GM10248 (cell line): ENCODE measurements at regions of chr9 and their contacts with region 1.

Region 1: GRCh38 chr9:120985810-120986222 is 59.2 kb upstream of the TRAF1 start:
- DNase-seq: peak; percentile 48
- CTCF ChIP-seq: peak; percentile 66

Region 2: DNA sequence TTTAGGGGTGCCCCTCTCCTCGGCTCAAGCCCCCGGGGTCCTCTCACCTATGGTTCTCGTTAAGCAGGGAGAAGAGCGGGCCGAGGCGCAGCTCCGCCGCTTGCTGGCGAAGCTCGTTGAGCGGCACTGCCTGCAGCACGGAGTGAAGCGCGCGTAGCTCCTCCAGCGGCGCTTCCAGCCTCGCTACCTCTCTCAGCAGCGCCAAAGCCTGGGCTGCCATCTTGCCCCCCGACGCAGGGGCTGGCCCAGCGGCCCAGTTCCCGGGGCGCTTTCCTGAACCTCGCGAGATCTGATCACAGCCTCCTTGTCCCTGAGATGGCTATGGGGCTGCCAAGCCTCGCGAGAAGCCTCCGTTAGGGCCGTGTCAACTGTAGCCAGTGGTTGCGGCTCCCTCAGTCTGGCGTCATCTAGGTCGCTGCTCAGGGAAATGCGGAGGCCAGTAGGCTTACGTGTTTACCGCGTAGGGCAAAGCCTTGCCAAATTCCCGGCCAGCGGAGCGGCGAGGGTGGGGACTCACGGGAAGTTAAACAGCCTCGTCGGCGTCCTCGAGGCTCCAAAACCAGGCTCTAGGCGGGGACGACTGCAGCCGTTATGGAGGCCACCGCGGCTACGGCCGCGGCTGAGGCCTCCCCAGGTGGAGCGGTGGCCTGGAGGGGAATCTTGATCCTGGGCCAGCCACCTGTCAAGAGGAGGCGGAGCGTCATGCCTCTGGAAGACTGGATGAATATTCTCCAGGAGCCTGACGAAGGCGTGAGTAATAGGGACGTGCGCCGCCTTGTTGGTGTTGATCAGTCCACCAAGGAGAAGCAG is 142.9 kb before region 1 on chr9 and contains the start of gene PSMD5:
- CTCF ChIA-PET with region 1: no interaction called
- POLR2A ChIA-PET with region 1: no interaction called
- DNase-seq: peak; percentile 99
- CTCF ChIP-seq: no peak

Region 3: GRCh38 chr9:120950421-120951388 is 35.1 kb before region 1 on chr9:
- CTCF ChIA-PET with region 1: interaction called, 15 read pairs
- POLR2A ChIA-PET with region 1: no interaction called
- DNase-seq: no peak
- CTCF ChIP-seq: no peak

Region 4: GRCh38 chr9:120960001-120960400 is 25.8 kb before region 1 on chr9:
- CTCF ChIA-PET with region 1: interaction called, 15 read pairs
- POLR2A ChIA-PET with region 1: no interaction called
- DNase-seq: no peak
- CTCF ChIP-seq: no peak

Region 5: DNA sequence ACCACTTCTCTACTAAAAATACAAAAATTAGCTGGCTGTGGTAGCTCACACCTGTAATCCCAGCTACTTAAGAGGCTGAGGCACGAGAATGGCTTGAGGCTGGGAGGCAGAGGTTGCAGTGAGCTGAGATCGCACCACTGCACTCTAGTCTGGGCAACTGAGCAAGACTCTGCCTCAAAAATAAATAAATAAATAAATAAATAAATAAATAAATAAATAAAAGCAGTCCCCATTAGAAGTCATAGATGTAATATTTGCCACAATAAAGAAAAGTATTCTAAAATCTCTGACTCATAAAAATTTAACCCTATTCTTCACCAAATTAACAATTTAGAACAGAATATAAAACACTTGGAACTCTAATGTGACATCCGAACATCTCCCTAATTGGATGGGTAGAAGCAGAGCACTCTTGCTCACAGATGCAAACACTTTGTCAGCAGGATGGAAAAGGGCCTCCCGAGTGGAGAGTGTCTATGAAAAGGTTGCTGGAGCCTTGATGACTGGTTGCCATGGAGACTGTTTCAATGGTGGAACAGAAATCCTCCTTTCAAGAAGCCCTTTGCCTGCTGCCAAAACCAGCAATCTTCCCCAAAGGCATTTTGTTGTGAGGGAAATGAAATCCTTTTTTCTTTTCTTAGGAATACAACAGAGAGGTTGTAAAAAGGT is 20.3 kb before region 1 on chr9:
- CTCF ChIA-PET with region 1: interaction called, 29 read pairs
- POLR2A ChIA-PET with region 1: no interaction called
- DNase-seq: no peak
- CTCF ChIP-seq: no peak

Region 6: GRCh38 chr9:121299467-121300234 is 313.8 kb after region 1 on chr9:
- CTCF ChIA-PET with region 1: no interaction called
- POLR2A ChIA-PET with region 1: no interaction called
- DNase-seq: peak; percentile 56
- CTCF ChIP-seq: no peak

Region 7: GRCh38 chr9:121439711-121440664 is 454.2 kb after region 1 on chr9:
- CTCF ChIA-PET with region 1: no interaction called
- POLR2A ChIA-PET with region 1: no interaction called
- DNase-seq: no peak
- CTCF ChIP-seq: no peak